ENCODE measurements at regions of chr10 and their contacts with region 1.

Region 1: GRCh38 chr10:124530215-124530665 is 68.6 kb downstream of the LHPP start:
- DNase-seq: peak; percentile 45 to 79
- H3K4me3 ChIP-seq: no peak overlapping the region
- H3K27ac ChIP-seq: no peak overlapping the region
- H3K4me1 ChIP-seq: no peaks in the 10 kb centered on the region
- H3K27me3 ChIP-seq: no peaks in the 10 kb centered on the region
- CTCF ChIP-seq: peak; percentile 77

Region 2: GRCh38 chr10:124647421-124648130 is 117.3 kb after region 1 on chr10:
- CTCF ChIA-PET with region 1: no interaction called
- POLR2A ChIA-PET with region 1: no interaction called
- intact Hi-C with region 1: no loop called
- DNase-seq: no peak
- H3K4me3 ChIP-seq: no peak overlapping the region
- H3K27ac ChIP-seq: no peak overlapping the region
- H3K4me1 ChIP-seq: peaks cover 16% of the 10 kb centered on the region
- H3K27me3 ChIP-seq: no peaks in the 10 kb centered on the region
- CTCF ChIP-seq: no peak

Region 3: GRCh38 chr10:124827474-124827873 is 297.2 kb after region 1 on chr10:
- CTCF ChIA-PET with region 1: interaction called, 3 read pairs
- POLR2A ChIA-PET with region 1: no interaction called
- intact Hi-C with region 1: loop called (anchors 5 kb)
- DNase-seq: no peak
- H3K4me3 ChIP-seq: no peak overlapping the region
- H3K27ac ChIP-seq: no peak overlapping the region
- H3K4me1 ChIP-seq: no peaks in the 10 kb centered on the region
- H3K27me3 ChIP-seq: no peaks in the 10 kb centered on the region
- CTCF ChIP-seq: peak; percentile 71

Region 4: GRCh38 chr10:125123476-125124114 is 593.4 kb after region 1 on chr10:
- CTCF ChIA-PET with region 1: interaction called, 14 read pairs
- POLR2A ChIA-PET with region 1: no interaction called
- intact Hi-C with region 1: no loop called
- DNase-seq: peak; percentile 84 to 89
- H3K4me3 ChIP-seq: no peak overlapping the region
- H3K27ac ChIP-seq: peak overlapping the region; percentile 82
- H3K4me1 ChIP-seq: peaks cover 26% of the 10 kb centered on the region
- H3K27me3 ChIP-seq: no peaks in the 10 kb centered on the region
- CTCF ChIP-seq: no peak

Measured in PC-9 (cell line).